PC-9 (cell line): ENCODE measurements at regions of chrX and their contacts with region 1.

Region 1: DNA sequence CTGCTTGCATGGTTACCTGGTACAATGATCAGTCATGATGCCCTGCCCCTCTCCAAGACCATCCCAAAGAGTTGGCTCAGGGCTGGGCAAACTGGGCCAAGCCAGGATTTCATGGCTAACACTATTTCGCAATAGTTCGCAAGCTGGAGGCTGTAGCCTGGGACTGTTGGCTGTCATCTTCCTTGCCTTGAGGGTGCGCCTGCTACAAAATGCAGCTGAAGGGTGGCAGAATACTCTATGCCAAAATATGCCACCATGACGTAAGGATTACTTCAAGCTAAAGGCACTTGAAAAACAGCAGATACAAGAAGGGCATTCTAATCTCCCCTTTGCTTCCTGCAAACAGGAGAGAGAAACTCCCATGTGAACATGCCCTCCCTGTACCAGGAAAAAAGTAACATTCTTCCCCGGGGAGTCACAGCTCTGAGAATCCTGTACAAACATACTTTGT is 21.0 kb downstream of the SAT1 start:
- DNase-seq: peak; percentile 65 to 98
- H3K4me3 ChIP-seq: peak overlapping the region; percentile 22; the same call in 1 of the 2 replicates
- H3K27ac ChIP-seq: peak overlapping the region; percentile 100
- H3K4me1 ChIP-seq: peaks cover 56% of the 10 kb centered on the region
- H3K27me3 ChIP-seq: no peaks in the 10 kb centered on the region
- CTCF ChIP-seq: no peak

Region 2: DNA sequence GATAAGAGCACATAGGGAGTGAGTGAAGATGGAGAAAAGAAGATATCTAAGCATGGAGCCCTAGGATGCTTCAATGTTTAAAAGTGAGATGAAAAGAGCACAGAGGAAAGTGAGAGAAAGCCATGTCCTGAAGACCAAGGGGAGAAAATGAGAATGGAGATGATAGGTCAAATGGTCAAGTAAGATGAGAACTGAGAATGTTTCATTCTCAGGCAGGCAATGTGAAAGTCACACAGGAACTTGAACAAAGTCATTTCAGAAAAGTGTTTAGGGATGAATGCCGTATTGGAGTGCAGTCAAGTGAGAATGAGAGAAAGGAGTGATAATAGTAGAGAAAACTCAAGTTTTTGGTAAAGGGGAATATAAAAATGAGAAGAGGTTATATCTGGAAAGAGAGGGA is 618.0 kb before region 1 on chrX:
- CTCF ChIA-PET with region 1: no interaction called
- POLR2A ChIA-PET with region 1: no interaction called
- intact Hi-C with region 1: no loop called
- DNase-seq: no peak
- H3K4me3 ChIP-seq: no peak overlapping the region
- H3K27ac ChIP-seq: no peak overlapping the region
- H3K4me1 ChIP-seq: no peaks in the 10 kb centered on the region
- H3K27me3 ChIP-seq: no peaks in the 10 kb centered on the region
- CTCF ChIP-seq: no peak

Region 3: GRCh38 chrX:23817172-23817601 is 13.2 kb after region 1 on chrX:
- CTCF ChIA-PET with region 1: no interaction called
- POLR2A ChIA-PET with region 1: interaction called, 15 read pairs
- intact Hi-C with region 1: no loop called
- DNase-seq: peak in 1 of 2 experiments; percentile 38
- H3K4me3 ChIP-seq: no peak overlapping the region
- H3K27ac ChIP-seq: no peak overlapping the region
- H3K4me1 ChIP-seq: peaks cover 4% of the 10 kb centered on the region; the same call in 1 of the 2 replicates
- H3K27me3 ChIP-seq: no peaks in the 10 kb centered on the region
- CTCF ChIP-seq: no peak